Activated T-helper 2 cell treated with anti-CD3 and anti-CD28 coated beads, Interferon-gamma antibody, Interleukin-2, Interleukin-4, amounts not matched to agents 10 μg/mL and 5 μg/mL and 100 μg/mL, durations not matched to agents 14 hours and 24 hours and 36 hours (primary cell): ENCODE measurements at regions of chr17 and their contacts with region 1.

Region 1: DNA sequence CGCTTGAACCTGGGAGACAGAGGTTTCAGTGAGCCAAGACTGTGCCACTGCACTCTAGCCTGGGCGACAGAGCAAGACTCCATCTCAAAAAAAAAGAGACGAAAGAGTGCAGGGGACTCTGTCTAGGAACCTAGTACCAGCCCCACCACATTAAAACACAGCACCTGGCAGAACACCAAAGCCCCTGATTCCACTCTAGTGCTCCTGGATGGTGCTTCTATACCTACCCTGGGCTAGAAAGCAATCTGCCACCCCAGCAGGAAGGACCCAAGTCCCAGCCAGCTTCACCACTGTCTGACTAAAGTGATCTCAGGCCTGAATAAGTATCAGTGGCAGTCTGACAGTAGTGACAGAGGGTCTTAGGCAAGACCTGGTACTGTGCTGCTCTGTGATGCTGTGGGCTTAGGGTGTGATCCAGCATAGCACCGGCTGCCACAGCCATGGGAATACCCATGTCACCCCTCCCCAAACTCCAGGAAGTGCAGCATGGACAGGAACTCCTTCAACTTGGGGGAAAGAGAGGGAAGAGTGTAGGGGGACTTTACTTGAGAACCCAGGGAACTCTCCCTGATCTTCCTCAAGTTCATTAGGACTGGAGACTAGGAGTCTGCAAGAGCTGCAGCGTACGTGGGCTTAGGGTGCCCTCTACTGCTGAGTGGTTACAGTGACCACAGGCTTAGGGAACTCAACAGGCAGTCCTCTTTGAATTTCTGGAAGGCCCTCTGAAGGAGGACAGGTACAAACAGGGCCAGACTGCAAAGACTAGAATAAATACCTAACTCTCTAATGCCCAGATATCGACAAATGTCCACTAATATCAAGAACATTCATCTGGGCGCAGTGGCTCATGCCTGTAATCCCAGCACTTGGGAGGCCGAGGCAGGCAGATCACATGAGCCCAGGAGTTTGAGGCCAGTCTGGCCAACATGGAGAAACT is 30.0 kb upstream of the RNF43 start:
- DNase-seq: peak; percentile 63
- H3K4me3 Mint-ChIP-seq: no peak overlapping the region
- H3K27ac Mint-ChIP-seq: no peak overlapping the region
- H3K4me1 Mint-ChIP-seq: peaks cover 7% of the 10 kb centered on the region
- H3K27me3 Mint-ChIP-seq: no peaks in the 10 kb centered on the region

Region 2: DNA sequence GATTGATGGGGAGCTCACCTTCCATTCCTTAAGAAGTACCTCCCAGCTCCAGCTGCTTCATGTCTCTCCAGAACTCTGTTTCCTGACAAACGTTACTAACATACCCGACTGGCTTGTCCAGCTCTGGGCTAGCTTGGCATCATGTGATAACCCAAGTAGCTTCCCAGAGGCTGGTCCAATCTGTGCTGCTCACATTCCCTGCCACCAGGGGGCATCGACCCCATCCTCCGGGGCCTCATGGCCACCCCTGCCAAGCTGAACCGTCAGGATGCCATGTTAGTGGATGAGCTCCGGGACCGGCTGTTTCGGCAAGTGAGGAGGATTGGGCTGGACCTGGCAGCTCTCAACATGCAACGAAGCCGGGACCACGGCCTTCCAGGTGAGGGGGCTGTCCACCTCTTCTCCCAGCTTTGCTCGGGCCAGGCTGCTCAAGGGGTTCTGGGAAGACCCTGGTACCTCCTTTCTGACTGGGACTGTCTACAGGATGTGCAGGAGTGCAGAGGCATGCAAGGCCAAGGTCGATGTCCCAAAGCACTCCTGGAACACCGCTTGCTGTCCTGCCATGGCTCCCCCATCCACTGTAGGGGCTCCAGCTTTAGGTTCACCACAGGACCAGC is 247.2 kb before region 1 on chr17:
- intact Hi-C with region 1: loop called (anchors 5 kb)
- DNase-seq: peak; percentile 35
- H3K4me3 Mint-ChIP-seq: no peak overlapping the region
- H3K27ac Mint-ChIP-seq: no peak overlapping the region
- H3K4me1 Mint-ChIP-seq: no peaks in the 10 kb centered on the region
- H3K27me3 Mint-ChIP-seq: peaks cover 3% of the 10 kb centered on the region

Region 3: GRCh38 chr17:58303971-58304725 is 143.2 kb before region 1 on chr17:
- intact Hi-C with region 1: loop called (anchors 1 kb)
- DNase-seq: no peak
- H3K4me3 Mint-ChIP-seq: no peak overlapping the region
- H3K27ac Mint-ChIP-seq: no peak overlapping the region
- H3K4me1 Mint-ChIP-seq: no peaks in the 10 kb centered on the region
- H3K27me3 Mint-ChIP-seq: peaks cover 6% of the 10 kb centered on the region

Region 4: GRCh38 chr17:58317421-58318064 is 129.8 kb before region 1 on chr17:
- intact Hi-C with region 1: loop called (anchors 1 kb)
- DNase-seq: peak; percentile 61
- H3K4me3 Mint-ChIP-seq: no peak overlapping the region
- H3K27ac Mint-ChIP-seq: peak overlapping the region; percentile 67
- H3K4me1 Mint-ChIP-seq: peaks cover 12% of the 10 kb centered on the region
- H3K27me3 Mint-ChIP-seq: no peaks in the 10 kb centered on the region